Aorta (tissue), 5 donors: ENCODE measurements at regions of chr19 and their contacts with region 1.

Region 1: GRCh38 chr19:5967994-5968430 is 9.9 kb downstream of the RANBP3 start:
- DNase-seq: peak in 1 of 2 donors; percentile 70
- ATAC-seq: peak; percentile 84
- H3K4me3 ChIP-seq: no peak overlapping the region
- H3K27ac ChIP-seq: no peak overlapping the region
- H3K4me1 ChIP-seq: no peaks in the 10 kb centered on the region
- H3K27me3 ChIP-seq: no peaks in the 10 kb centered on the region

Region 2: DNA sequence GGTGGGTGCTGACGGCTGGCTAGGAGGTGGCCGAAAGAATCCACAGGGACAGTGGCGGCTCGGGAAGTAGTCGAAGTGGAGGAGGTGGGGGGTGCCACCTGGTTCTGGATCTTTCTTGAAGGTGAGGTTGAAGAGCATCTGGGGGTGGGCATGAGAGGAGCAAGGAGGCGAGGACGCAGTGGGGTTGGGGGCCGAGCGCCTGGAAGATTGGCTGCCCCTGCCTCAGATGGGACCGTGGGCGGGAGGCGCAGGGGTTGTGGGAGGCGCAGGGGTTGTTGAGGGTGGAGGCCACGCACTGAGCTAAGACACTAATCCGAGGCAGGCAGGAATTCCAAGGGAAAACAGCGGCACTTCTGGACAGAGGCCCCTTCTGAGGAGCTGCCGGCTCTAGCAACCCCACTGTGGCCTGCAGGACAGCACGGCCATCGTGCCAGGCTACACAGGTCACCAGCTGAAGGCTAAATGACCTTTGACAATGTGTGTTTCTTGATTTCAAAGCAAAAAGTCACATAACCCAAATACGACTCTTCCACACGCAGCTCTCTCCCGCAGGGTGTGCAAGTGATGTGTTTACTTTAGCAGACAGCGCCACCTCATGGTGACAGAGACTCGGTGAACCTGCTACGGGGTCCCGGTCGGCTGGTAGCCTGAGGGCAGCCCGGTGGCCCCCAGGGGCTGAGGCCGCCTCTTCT is 54.0 kb after region 1 on chr19:
- intact Hi-C with region 1: loop called in 1 of 2 experiments (anchors 5 kb)
- DNase-seq: peak; percentile 80 to 87
- ATAC-seq: peak; percentile 79
- H3K4me3 ChIP-seq: no peak overlapping the region
- H3K27ac ChIP-seq: no peak overlapping the region
- H3K4me1 ChIP-seq: no peaks in the 10 kb centered on the region
- H3K27me3 ChIP-seq: no peaks in the 10 kb centered on the region